ENCODE measurements at regions of chr16 and their contacts with region 1.

Region 1: DNA sequence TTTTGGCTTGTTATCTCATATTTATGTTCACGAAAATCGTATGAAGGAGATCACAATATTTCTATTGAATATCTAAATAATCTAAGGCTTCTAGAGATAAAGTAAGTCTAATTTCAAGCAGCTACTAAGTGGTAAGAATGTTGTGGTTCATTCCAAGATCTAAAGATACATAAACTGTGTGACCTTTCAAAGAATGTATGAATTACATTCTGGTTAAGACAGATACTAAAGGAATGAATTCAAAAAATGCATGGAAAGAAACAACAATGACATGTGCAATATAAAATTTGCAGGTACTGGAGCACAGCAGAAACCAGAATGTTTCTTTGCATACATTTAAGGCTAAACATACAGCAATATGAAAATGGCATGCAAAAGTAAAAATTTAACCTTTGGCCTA is 1214.6 kb downstream of the CDH8 start:
- DNase-seq: no peak
- H3K4me3 ChIP-seq: no peak overlapping the region
- H3K27ac ChIP-seq: no peak overlapping the region
- H3K4me1 ChIP-seq: no peaks in the 10 kb centered on the region
- H3K27me3 ChIP-seq: no peaks in the 10 kb centered on the region
- CTCF ChIP-seq: no peak
- POLR2A ChIP-seq: no peak

Region 2: DNA sequence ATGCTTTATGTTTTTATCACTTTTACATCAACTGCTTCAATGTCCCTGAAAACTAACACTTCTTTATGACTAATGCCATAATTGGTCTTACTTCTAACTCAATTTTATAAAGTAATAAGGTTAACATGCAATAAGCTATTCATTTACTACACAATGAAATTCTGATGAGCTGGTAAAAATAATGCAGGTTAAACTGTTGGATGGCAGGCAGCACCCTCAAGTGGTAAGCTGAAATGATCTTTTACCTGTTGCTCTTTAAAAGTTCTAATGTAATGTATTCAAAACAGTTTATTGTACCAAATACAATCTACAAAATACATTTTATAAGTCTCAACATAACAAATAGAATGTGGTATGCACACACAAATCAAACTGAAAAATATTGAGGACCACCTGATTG is 65.8 kb before region 1 on chr16:
- CTCF ChIA-PET with region 1: no interaction called
- POLR2A ChIA-PET with region 1: no interaction called
- dilution Hi-C with region 1: no loop called
- intact Hi-C with region 1: loop called (anchors 2 kb)
- DNase-seq: no peak
- H3K4me3 ChIP-seq: no peak overlapping the region
- H3K27ac ChIP-seq: no peak overlapping the region
- H3K4me1 ChIP-seq: no peaks in the 10 kb centered on the region
- H3K27me3 ChIP-seq: no peaks in the 10 kb centered on the region
- CTCF ChIP-seq: no peak
- POLR2A ChIP-seq: no peak

Measured in endothelial cell of umbilical vein (primary cell).